H1 (cell line): ENCODE measurements at regions of chr21 and their contacts with region 1.

Region 1: DNA sequence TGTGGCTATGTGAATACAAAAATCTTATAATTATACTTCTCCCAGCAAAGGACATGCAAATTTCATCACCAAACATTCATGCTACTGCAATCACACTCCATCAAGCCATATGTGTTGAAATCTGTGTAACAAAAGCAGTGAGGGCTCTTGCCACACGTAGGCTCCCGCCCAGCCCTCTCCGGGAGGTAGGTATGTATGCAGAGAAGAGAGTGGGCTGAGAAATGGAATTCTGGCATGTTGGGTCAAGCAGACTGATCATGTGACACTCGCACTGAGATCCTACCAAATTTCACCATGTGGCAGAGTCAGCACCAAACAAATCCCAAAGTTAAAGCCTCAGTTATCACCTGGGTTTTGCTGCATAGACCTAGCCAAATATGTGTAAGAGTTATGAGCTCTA is 49.7 kb downstream of the APP start:
- DNase-seq: no peak
- H3K4me3 ChIP-seq: no peak overlapping the region
- H3K27ac ChIP-seq: no peak overlapping the region
- H3K4me1 ChIP-seq: peaks cover 7 to 26% (median 24%) of the 10 kb centered on the region in 4 experiments
- H3K27me3 ChIP-seq: no peaks in the 10 kb centered on the region
- CTCF ChIP-seq: no peak
- EP300 ChIP-seq: 0 out of 3 replicates have a peak, but pooled peaks of 1 of the 2 experiments have one; percentile 21
- POLR2A ChIP-seq: peak in 1 of 2 experiments; percentile 53; a peak in 1 of 3 replicates
- RAD21 ChIP-seq: no peak

Region 2: GRCh38 chr21:26106562-26106961 is 14.3 kb before region 1 on chr21:
- CTCF ChIA-PET with region 1: interaction called, 3 read pairs
- POLR2A ChIA-PET with region 1: interaction called, 12 read pairs
- DNase-seq: no peak
- H3K4me3 ChIP-seq: peak overlapping the region in 1 of 4 experiments; percentile 7; a peak in 1 of 8 replicates
- H3K27ac ChIP-seq: no peak overlapping the region; the same call in 1 of the 2 replicates
- H3K4me1 ChIP-seq: peaks cover 0 to 26% (median 20%) of the 10 kb centered on the region in 4 experiments; a peak in 6 of 7 replicates
- H3K27me3 ChIP-seq: no peaks in the 10 kb centered on the region
- CTCF ChIP-seq: no peak
- EP300 ChIP-seq: no peak
- POLR2A ChIP-seq: no peak
- RAD21 ChIP-seq: no peak